Naive thymus-derived CD4-positive, alpha-beta T cell (primary cell): ENCODE measurements at regions of chr11 and their contacts with region 1.

Region 1: GRCh38 chr11:809287-810039 is at the start of gene RPLP2:
- DNase-seq: peak; percentile 95 to 99 (median 98)
- ATAC-seq: peak; percentile 90
- H3K4me3 ChIP-seq: peak within 1 kb of the TSS; percentile 96
- H3K4me3 Mint-ChIP-seq: peak within 1 kb of the TSS; percentile 88 to 96 (median 95)
- H3K27ac ChIP-seq: peak within 1 kb of the TSS; percentile 96
- H3K27ac Mint-ChIP-seq: peak within 1 kb of the TSS; percentile 91 to 99 (median 97)
- H3K4me1 ChIP-seq: peaks cover 24 to 26% of the 10 kb centered on the region in 2 donors
- H3K4me1 Mint-ChIP-seq: peaks cover 8 to 51% (median 32%) of the 10 kb centered on the region in 7 donors
- H3K27me3 ChIP-seq: no peaks in the 10 kb centered on the region
- H3K27me3 Mint-ChIP-seq: no peaks in the 10 kb centered on the region
- total RNA-seq, gene RPLP2: 2,266 to 5,944 (median 5,497) TPM

Region 2: DNA sequence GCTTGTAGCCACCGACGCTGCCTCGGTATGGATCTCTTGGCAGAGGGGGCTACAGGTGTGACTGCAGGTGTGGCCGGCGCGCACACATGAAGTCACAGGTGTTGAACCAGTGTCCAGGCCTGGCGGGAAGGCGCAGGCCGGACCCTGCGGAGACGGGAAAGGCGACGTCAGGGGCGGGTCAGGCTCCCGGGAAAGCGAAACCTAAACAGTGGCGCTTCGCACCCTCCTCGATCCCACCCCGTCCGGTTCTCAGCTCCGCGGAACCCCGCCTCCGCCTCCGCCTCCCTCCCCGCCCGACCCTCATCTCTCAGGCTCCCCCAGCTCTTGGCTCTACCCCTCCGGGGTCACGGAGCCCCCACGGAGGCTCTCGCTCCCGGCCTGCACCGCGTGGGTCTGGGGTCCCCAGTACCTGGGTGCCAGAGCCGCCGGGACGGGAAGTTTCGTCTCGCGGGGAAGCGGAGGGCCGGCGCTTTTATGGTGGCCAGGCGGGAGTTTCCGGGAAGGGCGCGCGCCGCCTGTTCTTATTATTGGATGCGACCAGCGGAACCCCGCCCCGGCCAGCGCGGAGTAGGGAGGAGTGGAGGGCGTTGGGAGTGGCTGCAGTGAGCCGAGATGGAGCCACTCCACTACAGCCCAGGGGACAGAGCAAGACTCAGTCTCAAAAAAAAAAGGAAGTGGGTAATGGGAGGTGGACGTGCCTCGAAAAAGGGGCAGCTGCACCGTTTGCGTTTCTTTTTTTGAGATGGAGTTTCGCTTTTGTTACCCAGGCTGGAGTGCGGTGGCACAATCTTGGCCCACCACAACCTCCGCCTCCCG is 193.8 kb before region 1 on chr11 and contains the start of gene IRF7:
- CTCF ChIA-PET with region 1: no interaction called
- POLR2A ChIA-PET with region 1: no interaction called
- intact Hi-C with region 1: loop called in 1 of 2 experiments (anchors 1 kb)
- DNase-seq: peak; percentile 70 to 91 (median 76)
- ATAC-seq: peak; percentile 91
- H3K4me3 ChIP-seq: peak within 1 kb of the TSS; percentile 97
- H3K4me3 Mint-ChIP-seq: peak within 1 kb of the TSS; percentile 80 to 94 (median 92)
- H3K27ac ChIP-seq: peak within 1 kb of the TSS; percentile 95
- H3K27ac Mint-ChIP-seq: peak within 1 kb of the TSS; percentile 83 to 97 (median 93)
- H3K4me1 ChIP-seq: peaks cover 8 to 22% of the 10 kb centered on the region in 2 donors
- H3K4me1 Mint-ChIP-seq: peaks cover 0 to 22% (median 15%) of the 10 kb centered on the region in 7 donors
- H3K27me3 ChIP-seq: no peaks in the 10 kb centered on the region
- H3K27me3 Mint-ChIP-seq: no peaks in the 10 kb centered on the region
- total RNA-seq, gene IRF7: 57.0 to 134 (median 64.6) TPM

Region 3: DNA sequence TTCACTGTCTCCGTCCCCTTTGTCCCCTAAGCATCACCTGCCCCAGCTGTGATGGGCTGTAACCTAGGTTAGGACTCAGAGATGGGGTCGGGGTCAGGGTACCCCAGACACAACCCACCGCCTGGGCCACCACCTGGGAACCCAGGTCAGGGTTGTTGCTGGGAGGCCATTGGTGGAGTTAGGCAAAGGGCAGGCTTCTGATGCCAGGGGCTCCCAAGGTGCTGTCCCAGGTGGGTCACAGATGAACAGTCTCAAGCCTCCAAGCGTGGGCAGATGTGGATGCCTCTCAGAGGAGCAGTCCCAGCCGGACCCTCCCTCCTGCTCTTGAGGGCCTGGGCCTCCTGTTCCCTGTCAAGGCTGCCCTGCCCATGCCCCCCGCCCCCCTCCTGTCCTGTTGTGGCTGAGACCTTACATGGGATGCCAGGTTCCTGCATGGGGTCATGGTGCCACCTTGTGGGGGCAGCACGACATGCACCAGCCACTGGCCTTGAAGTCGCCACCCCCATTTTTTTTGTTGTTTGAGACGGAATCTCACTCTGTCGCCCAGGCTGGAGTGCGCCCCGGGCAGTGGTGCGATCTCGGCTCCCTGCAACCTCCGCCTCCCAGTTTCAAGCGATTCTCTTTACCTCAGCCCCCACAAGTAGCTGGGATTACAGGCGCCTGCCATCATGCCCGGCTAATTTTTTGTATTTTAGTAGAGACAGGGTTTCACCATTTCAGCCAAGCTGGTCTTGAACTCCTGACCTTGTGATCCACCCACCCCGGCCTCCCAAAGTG is 44.2 kb before region 1 on chr11:
- CTCF ChIA-PET with region 1: no interaction called
- POLR2A ChIA-PET with region 1: no interaction called
- intact Hi-C with region 1: no loop called
- DNase-seq: peak; percentile 47 to 74 (median 68)
- ATAC-seq: peak; percentile 92
- H3K4me3 ChIP-seq: no peak overlapping the region
- H3K4me3 Mint-ChIP-seq: no peak overlapping the region
- H3K27ac ChIP-seq: no peak overlapping the region
- H3K27ac Mint-ChIP-seq: peak overlapping the region in 5 of 9 donors; percentile 40 to 85 (median 64)
- H3K4me1 ChIP-seq: no peaks in the 10 kb centered on the region
- H3K4me1 Mint-ChIP-seq: peaks cover 0 to 7% (median 0%) of the 10 kb centered on the region in 7 donors
- H3K27me3 ChIP-seq: no peaks in the 10 kb centered on the region
- H3K27me3 Mint-ChIP-seq: no peaks in the 10 kb centered on the region

Region 4: DNA sequence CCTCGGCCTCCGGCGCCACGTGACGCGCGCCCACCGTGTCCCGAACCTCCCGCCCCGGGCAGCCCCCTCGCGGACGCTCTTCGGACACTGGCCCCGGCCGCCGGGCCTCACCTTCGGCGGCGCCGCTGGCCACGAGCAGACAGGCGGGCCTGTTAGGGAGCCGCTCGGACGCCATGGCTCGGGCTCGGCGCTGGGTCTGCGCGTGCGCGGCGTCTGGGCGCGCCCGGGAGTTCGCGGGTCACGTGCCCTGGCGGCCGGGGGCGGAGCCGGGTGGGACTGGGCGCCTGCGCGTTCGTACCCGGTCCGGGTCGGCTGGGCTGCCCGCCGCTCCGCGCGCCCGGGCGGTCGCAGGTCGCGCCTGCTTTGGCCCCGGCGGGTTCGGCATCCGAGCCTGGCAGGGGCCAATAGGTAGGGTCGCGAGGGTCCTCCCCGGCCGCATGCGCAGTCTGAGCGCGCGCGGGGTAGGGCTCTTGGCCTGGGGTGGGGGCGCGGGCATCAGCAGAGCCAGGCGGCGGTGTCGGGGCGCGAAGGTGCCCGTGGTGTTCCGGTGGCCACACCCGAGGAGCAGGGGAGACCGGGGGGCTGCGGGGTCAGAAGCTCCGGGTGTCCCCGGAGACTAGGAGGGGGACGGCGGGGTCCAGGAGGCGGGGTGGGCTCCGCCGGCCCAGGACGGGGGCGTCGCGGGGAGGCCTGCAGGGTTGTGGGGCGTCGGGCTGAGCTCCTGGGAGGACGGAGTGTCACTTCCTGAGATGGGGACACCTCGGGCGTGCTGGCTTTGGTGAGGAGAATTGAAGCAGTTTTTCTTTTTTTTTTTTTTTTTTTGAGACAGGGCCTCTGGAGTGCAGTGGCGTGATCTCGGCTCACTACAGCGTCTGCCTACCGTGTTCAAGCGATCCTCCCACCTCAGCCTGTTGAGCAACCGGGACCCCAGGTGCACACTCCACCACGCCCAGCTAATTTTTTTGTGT is 31.9 kb before region 1 on chr11 and contains the start of gene GATD1:
- CTCF ChIA-PET with region 1: no interaction called
- POLR2A ChIA-PET with region 1: interaction called, 7 read pairs
- intact Hi-C with region 1: loop called in 1 of 2 experiments (anchors 1 kb)
- DNase-seq: peak; percentile 86 to 99 (median 93)
- ATAC-seq: peak; percentile 93
- H3K4me3 ChIP-seq: peak within 1 kb of the TSS; percentile 59
- H3K4me3 Mint-ChIP-seq: peak within 1 kb of the TSS; percentile 72 to 91 (median 83)
- H3K27ac ChIP-seq: peak within 1 kb of the TSS; percentile 85
- H3K27ac Mint-ChIP-seq: peak within 1 kb of the TSS; percentile 40 to 92 (median 78)
- H3K4me1 ChIP-seq: peaks cover 12 to 14% of the 10 kb centered on the region in 2 donors
- H3K4me1 Mint-ChIP-seq: peaks cover 7 to 29% (median 23%) of the 10 kb centered on the region in 7 donors
- H3K27me3 ChIP-seq: no peaks in the 10 kb centered on the region
- H3K27me3 Mint-ChIP-seq: no peaks in the 10 kb centered on the region
- total RNA-seq, gene GATD1: 37.8 to 59.2 (median 52.9) TPM

Region 5: GRCh38 chr11:842370-843002 is 33.0 kb after region 1 on chr11 and contains the starts of genes POLR2L and TSPAN4:
- CTCF ChIA-PET with region 1: no interaction called
- POLR2A ChIA-PET with region 1: interaction called, 9 read pairs
- intact Hi-C with region 1: loop called in 1 of 2 experiments (anchors 1 kb)
- DNase-seq: peak; percentile 76 to 97 (median 81)
- ATAC-seq: peak; percentile 86
- H3K4me3 ChIP-seq: peak within 1 kb of the TSS; percentile 83
- H3K4me3 Mint-ChIP-seq: peak within 1 kb of the TSS; percentile 74 to 89 (median 86)
- H3K27ac ChIP-seq: peak within 1 kb of the TSS; percentile 89
- H3K27ac Mint-ChIP-seq: peak within 1 kb of the TSS; percentile 28 to 89 (median 70)
- H3K4me1 ChIP-seq: peaks cover 16 to 21% of the 10 kb centered on the region in 2 donors
- H3K4me1 Mint-ChIP-seq: peaks cover 5 to 36% (median 18%) of the 10 kb centered on the region in 7 donors
- H3K27me3 ChIP-seq: no peaks in the 10 kb centered on the region
- H3K27me3 Mint-ChIP-seq: peaks cover 0 to 2% (median 0%) of the 10 kb centered on the region in 5 donors
- total RNA-seq, gene POLR2L: 31.2 to 93.3 (median 44.9) TPM
- total RNA-seq, gene TSPAN4: 4.8 to 12.6 (median 6.6) TPM

Region 6: GRCh38 chr11:1050581-1051355 is 241.3 kb after region 1 on chr11:
- CTCF ChIA-PET with region 1: no interaction called
- POLR2A ChIA-PET with region 1: interaction called, 5 read pairs
- intact Hi-C with region 1: loop called in 1 of 2 experiments (anchors 1 kb)
- DNase-seq: peak; percentile 54 to 78 (median 68)
- ATAC-seq: peak; percentile 95
- H3K4me3 ChIP-seq: no peak overlapping the region
- H3K4me3 Mint-ChIP-seq: no peak overlapping the region
- H3K27ac ChIP-seq: no peak overlapping the region
- H3K27ac Mint-ChIP-seq: no peak overlapping the region
- H3K4me1 ChIP-seq: no peaks in the 10 kb centered on the region
- H3K4me1 Mint-ChIP-seq: peaks cover 0 to 5% (median 0%) of the 10 kb centered on the region in 7 donors
- H3K27me3 ChIP-seq: peaks cover 0 to 5% of the 10 kb centered on the region in 2 donors
- H3K27me3 Mint-ChIP-seq: peaks cover 0 to 11% (median 4%) of the 10 kb centered on the region in 5 donors